Body of pancreas (tissue), 4 donors: ENCODE measurements at regions of chr19 and their contacts with region 1.

Region 1: GRCh38 chr19:21202865-21203494 is 61.1 kb downstream of the ZNF431 start:
- DNase-seq: peak; percentile 20 to 47 (median 38)
- ATAC-seq: peak; percentile 71
- H3K4me3 ChIP-seq: no peak overlapping the region
- H3K27ac ChIP-seq: no peak overlapping the region
- H3K4me1 ChIP-seq: peaks cover 1% of the 10 kb centered on the region
- H3K27me3 ChIP-seq: no peaks in the 10 kb centered on the region
- CTCF ChIP-seq: peak; percentile 58 to 88 (median 81)
- POLR2A ChIP-seq: no peak

Region 2: GRCh38 chr19:21482863-21483276 is 279.9 kb after region 1 on chr19:
- intact Hi-C with region 1: loop called (anchors 5 kb)
- DNase-seq: peak; percentile 51 to 78 (median 71)
- ATAC-seq: peak; percentile 88
- H3K4me3 ChIP-seq: no peak overlapping the region
- H3K27ac ChIP-seq: no peak overlapping the region
- H3K4me1 ChIP-seq: peaks cover 8% of the 10 kb centered on the region
- H3K27me3 ChIP-seq: no peaks in the 10 kb centered on the region
- CTCF ChIP-seq: peak; percentile 79 to 95 (median 85)
- POLR2A ChIP-seq: no peak

Region 3: GRCh38 chr19:21698215-21698614 is 495.2 kb after region 1 on chr19:
- intact Hi-C with region 1: loop called (anchors 10 kb)
- DNase-seq: peak in 1 of 4 donors; percentile 46
- ATAC-seq: peak; percentile 77
- H3K4me3 ChIP-seq: no peak overlapping the region
- H3K27ac ChIP-seq: no peak overlapping the region
- H3K4me1 ChIP-seq: peaks cover 19% of the 10 kb centered on the region
- H3K27me3 ChIP-seq: no peaks in the 10 kb centered on the region
- CTCF ChIP-seq: peak; percentile 26 to 82 (median 76)
- POLR2A ChIP-seq: no peak